Ovary (tissue), 10 donors: ENCODE measurements at regions of chr3 and their contacts with region 1.

Region 1: GRCh38 chr3:10788451-10788850 is 27.6 kb upstream of the SLC6A11 start:
- DNase-seq: no peak
- H3K4me3 ChIP-seq: no peak overlapping the region
- H3K27ac ChIP-seq: no peak overlapping the region
- H3K4me1 ChIP-seq: no peaks in the 10 kb centered on the region
- H3K27me3 ChIP-seq: no peaks in the 10 kb centered on the region
- CTCF ChIP-seq: no peak
- EP300 ChIP-seq: no peak
- POLR2A ChIP-seq: no peak

Region 2: GRCh38 chr3:9369508-9369907 is 1418.9 kb before region 1 on chr3:
- intact Hi-C with region 1: loop called in 1 of 4 experiments (anchors 5 kb)
- DNase-seq: no peak
- H3K4me3 ChIP-seq: no peak overlapping the region
- H3K27ac ChIP-seq: no peak overlapping the region
- H3K4me1 ChIP-seq: peaks cover 2% of the 10 kb centered on the region
- H3K27me3 ChIP-seq: no peaks in the 10 kb centered on the region
- CTCF ChIP-seq: no peak
- EP300 ChIP-seq: no peak
- POLR2A ChIP-seq: no peak

Region 3: DNA sequence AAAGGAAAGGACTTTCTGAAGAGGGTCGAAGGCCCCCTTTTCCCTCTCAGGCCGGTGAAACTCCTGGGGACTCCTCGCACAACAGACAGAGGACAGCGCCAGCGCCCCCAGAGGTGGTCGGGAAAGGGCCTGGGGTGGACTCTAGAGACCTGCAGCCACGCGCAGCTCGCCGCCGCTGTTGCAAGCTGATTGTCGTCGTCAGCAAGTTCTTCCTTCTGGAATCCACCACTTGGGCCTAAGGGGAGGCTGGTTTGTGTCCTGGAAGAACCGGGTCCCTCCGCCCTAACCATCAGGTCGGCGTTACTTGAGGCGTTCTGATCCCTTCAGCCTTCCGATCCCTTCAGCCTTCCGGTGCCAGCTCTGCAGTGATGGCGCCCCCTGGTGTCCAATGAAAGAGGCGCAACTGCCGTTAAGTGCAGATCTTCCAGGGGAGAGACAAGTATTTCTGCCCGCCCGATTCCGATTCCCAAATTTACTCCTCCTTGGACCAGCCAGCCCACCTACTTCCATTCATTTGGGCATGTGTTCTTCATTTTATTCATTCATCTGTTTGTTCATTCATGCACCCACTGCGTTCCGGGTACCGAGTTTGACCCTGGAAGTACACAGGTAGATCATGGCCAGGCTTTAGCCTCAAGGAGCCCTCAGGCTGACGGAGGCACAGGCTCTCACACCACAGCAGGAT is 49.6 kb before region 1 on chr3:
- intact Hi-C with region 1: no loop called
- DNase-seq: peak; percentile 40 to 75 (median 63)
- H3K4me3 ChIP-seq: peak overlapping the region; percentile 7
- H3K27ac ChIP-seq: no peak overlapping the region
- H3K4me1 ChIP-seq: peaks cover 1% of the 10 kb centered on the region
- H3K27me3 ChIP-seq: no peaks in the 10 kb centered on the region
- CTCF ChIP-seq: peak; percentile 22 to 55 (median 31)
- EP300 ChIP-seq: no peak
- POLR2A ChIP-seq: no peak

Region 4: GRCh38 chr3:10845839-10846656 is 57.6 kb after region 1 on chr3:
- intact Hi-C with region 1: no loop called
- DNase-seq: no peak
- H3K4me3 ChIP-seq: no peak overlapping the region
- H3K27ac ChIP-seq: no peak overlapping the region
- H3K4me1 ChIP-seq: no peaks in the 10 kb centered on the region
- H3K27me3 ChIP-seq: no peaks in the 10 kb centered on the region
- CTCF ChIP-seq: no peak
- EP300 ChIP-seq: no peak
- POLR2A ChIP-seq: no peak

Region 5: DNA sequence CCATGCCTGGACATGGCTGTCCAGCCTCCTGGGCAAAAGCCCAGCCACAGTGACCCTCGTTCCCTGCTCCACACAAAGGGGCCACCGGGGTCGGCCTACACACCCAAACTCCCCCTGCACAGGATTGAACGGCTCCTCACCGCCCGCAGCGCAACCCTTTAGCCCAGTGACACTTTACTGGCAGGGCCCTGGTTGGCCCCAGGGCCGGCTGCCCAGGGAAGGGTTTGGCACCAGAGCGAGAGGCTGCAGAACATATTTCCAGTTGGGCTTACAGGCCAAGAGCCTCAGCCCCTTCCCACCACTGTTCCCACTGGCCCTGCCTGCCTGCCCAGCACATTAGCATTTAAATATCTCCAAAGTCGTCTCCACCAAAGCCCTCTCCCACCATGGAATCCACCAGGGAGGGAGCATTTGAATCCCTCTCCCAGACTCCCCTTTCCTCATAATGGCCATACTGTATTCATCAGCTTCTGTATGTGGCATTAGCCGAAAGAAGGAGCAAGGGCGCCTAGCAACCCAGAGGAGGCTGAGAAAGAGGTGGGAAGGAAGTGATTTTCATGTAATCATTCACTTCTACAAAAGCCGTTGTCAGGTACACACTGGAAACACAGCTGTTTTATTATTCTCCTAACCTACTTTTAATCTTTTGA is 113.0 kb after region 1 on chr3:
- intact Hi-C with region 1: no loop called
- DNase-seq: no peak
- H3K4me3 ChIP-seq: no peak overlapping the region
- H3K27ac ChIP-seq: no peak overlapping the region
- H3K4me1 ChIP-seq: no peaks in the 10 kb centered on the region
- H3K27me3 ChIP-seq: no peaks in the 10 kb centered on the region
- CTCF ChIP-seq: no peak
- EP300 ChIP-seq: no peak
- POLR2A ChIP-seq: no peak